ENCODE measurements at regions of chr12 and their contacts with region 1.

Region 1: DNA sequence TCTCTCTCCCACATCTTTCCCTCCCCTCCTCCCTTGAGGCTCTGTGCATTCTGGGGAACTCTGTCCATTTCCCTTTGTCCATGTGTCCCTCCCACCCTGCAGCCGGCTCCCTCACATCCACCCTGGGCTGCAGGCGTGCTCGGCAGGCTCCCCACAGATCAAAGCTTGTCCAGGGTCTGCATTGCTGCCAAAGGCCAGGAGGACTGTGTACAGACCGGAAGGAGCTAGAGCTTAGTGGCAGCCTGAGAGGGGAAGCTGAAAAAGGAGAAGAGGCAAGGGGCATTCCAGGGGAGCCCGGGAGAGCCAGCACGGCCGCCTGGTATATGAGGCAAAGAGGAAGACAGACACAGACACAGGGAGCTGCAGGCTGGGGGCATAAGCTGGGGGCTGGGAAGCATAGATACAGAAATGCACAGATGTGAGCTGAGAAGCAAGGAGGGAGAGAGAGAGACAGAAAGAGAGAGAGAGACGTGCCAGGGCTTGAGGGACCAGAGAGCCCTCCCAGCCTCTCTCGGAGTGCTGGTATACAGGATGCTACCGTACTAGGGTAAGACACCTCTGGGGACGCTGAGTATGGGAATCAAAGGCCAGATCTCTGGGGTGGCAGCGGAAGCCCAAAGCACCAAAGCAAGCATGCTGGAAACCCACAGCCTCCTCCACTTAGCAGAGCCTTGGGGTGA is 3.3 kb downstream of the CD4 start:
- DNase-seq: peak; percentile 69
- ATAC-seq: peak; percentile 90
- H3K4me3 Mint-ChIP-seq: peak overlapping the region; percentile 35
- H3K27ac Mint-ChIP-seq: peak overlapping the region; percentile 34
- H3K4me1 Mint-ChIP-seq: peaks cover 30% of the 10 kb centered on the region
- H3K27me3 Mint-ChIP-seq: peaks cover 28% of the 10 kb centered on the region

Region 2: GRCh38 chr12:6312529-6313325 is 479.9 kb before region 1 on chr12:
- CTCF ChIA-PET with region 1: no interaction called
- POLR2A ChIA-PET with region 1: no interaction called
- DNase-seq: no peak
- ATAC-seq: no peak
- H3K4me3 Mint-ChIP-seq: no peak overlapping the region
- H3K27ac Mint-ChIP-seq: no peak overlapping the region
- H3K4me1 Mint-ChIP-seq: peaks cover 10% of the 10 kb centered on the region
- H3K27me3 Mint-ChIP-seq: peaks cover 19% of the 10 kb centered on the region

Region 3: GRCh38 chr12:6764011-6764828 is 28.4 kb before region 1 on chr12:
- CTCF ChIA-PET with region 1: interaction called, 160 read pairs
- POLR2A ChIA-PET with region 1: interaction called, 6 read pairs
- DNase-seq: peak; percentile 75
- ATAC-seq: peak; percentile 67
- H3K4me3 Mint-ChIP-seq: peak overlapping the region; percentile 19
- H3K27ac Mint-ChIP-seq: peak overlapping the region; percentile 23
- H3K4me1 Mint-ChIP-seq: peaks cover 43% of the 10 kb centered on the region
- H3K27me3 Mint-ChIP-seq: peaks cover 43% of the 10 kb centered on the region

Region 4: GRCh38 chr12:7472060-7472459 is 679.4 kb after region 1 on chr12:
- CTCF ChIA-PET with region 1: no interaction called
- POLR2A ChIA-PET with region 1: no interaction called
- DNase-seq: no peak
- ATAC-seq: no peak
- H3K4me3 Mint-ChIP-seq: no peak overlapping the region
- H3K27ac Mint-ChIP-seq: no peak overlapping the region
- H3K4me1 Mint-ChIP-seq: no peaks in the 10 kb centered on the region
- H3K27me3 Mint-ChIP-seq: peaks cover 8% of the 10 kb centered on the region